Transverse colon (tissue), 4 donors: ENCODE measurements at regions of chr12 and their contacts with region 1.

Region 1: GRCh38 chr12:64696080-64696741 is 63.0 kb downstream of the GNS start:
- DNase-seq: no peak
- H3K4me3 ChIP-seq: no peak overlapping the region
- H3K27ac ChIP-seq: peak overlapping the region; percentile 21 to 51 (median 34)
- H3K4me1 ChIP-seq: peaks cover 0 to 55% (median 12%) of the 10 kb centered on the region in 4 donors
- H3K27me3 ChIP-seq: no peaks in the 10 kb centered on the region
- CTCF ChIP-seq: peak in 4 of 5 experiments; percentile 23 to 39 (median 30)
- EP300 ChIP-seq: no peak
- POLR2A ChIP-seq: no peak

Region 2: GRCh38 chr12:64440100-64440499 is 256.1 kb before region 1 on chr12:
- in situ Hi-C with region 1: loop called in 1 of 4 experiments (anchors 25 kb)
- intact Hi-C with region 1: loop called (anchors 5 kb)
- DNase-seq: no peak
- H3K4me3 ChIP-seq: no peak overlapping the region
- H3K27ac ChIP-seq: no peak overlapping the region
- H3K4me1 ChIP-seq: no peaks in the 10 kb centered on the region
- H3K27me3 ChIP-seq: no peaks in the 10 kb centered on the region
- CTCF ChIP-seq: no peak
- EP300 ChIP-seq: no peak
- POLR2A ChIP-seq: no peak

Region 3: DNA sequence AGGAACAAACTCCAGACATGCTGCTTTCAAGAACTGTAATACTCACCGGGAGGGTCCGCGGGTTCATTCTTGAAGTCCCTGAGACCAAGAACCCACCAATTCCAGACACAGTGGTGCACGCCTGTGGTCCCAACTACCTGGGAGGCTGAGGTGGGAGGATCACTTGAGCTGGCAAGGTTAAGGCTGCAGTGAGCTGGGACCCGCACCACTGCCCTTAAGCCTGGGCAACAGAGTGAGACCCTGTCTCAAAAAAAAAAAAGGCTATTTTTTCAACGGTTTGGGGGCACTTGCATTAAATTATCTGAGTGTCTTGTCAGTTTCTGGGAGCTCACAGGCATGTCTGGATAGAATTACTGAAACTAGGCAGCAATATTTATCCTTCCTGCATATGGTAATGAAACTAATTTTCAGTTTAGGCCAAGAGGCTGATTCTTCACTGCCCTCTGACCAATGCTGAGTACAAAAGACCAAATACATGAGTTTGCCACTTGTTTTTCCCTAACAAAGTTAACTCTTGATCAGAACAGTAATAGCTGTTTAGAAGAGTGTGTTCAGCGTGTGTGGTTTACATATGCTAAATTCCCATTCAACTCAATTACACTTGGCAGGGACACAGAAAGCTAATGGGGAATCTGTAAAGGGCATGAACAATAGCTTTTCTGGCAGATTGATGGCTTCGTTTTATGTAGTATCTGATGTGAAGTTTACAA is 151.7 kb before region 1 on chr12:
- in situ Hi-C with region 1: loop called in 2 of 4 experiments (anchors 5 kb)
- intact Hi-C with region 1: no loop called
- DNase-seq: no peak
- H3K4me3 ChIP-seq: no peak overlapping the region
- H3K27ac ChIP-seq: no peak overlapping the region
- H3K4me1 ChIP-seq: no peaks in the 10 kb centered on the region
- H3K27me3 ChIP-seq: no peaks in the 10 kb centered on the region
- CTCF ChIP-seq: no peak
- EP300 ChIP-seq: no peak
- POLR2A ChIP-seq: no peak

Region 4: GRCh38 chr12:64551698-64552097 is 144.5 kb before region 1 on chr12:
- in situ Hi-C with region 1: loop called (anchors 5 to 10 kb)
- intact Hi-C with region 1: loop called (anchors 5 kb)
- DNase-seq: no peak
- H3K4me3 ChIP-seq: no peak overlapping the region
- H3K27ac ChIP-seq: no peak overlapping the region
- H3K4me1 ChIP-seq: peaks cover 0 to 6% (median 0%) of the 10 kb centered on the region in 4 donors
- H3K27me3 ChIP-seq: no peaks in the 10 kb centered on the region
- CTCF ChIP-seq: no peak
- EP300 ChIP-seq: no peak
- POLR2A ChIP-seq: no peak

Region 5: GRCh38 chr12:64610149-64610678 is 86.0 kb before region 1 on chr12 and contains the start of gene RASSF3:
- in situ Hi-C with region 1: loop called in 1 of 4 experiments (anchors 10 kb)
- intact Hi-C with region 1: loop called (anchors 5 kb)
- DNase-seq: peak; percentile 85
- H3K4me3 ChIP-seq: peak within 1 kb of the TSS; percentile 82 to 95 (median 86)
- H3K27ac ChIP-seq: peak within 1 kb of the TSS; percentile 91 to 97 (median 96)
- H3K4me1 ChIP-seq: peaks cover 5 to 38% (median 14%) of the 10 kb centered on the region in 4 donors
- H3K27me3 ChIP-seq: no peaks in the 10 kb centered on the region
- CTCF ChIP-seq: no peak
- EP300 ChIP-seq: no peak
- POLR2A ChIP-seq: peak; percentile 59
- total RNA-seq, gene RASSF3: 41.6 to 83.2 (median 62.5) TPM

Region 6: DNA sequence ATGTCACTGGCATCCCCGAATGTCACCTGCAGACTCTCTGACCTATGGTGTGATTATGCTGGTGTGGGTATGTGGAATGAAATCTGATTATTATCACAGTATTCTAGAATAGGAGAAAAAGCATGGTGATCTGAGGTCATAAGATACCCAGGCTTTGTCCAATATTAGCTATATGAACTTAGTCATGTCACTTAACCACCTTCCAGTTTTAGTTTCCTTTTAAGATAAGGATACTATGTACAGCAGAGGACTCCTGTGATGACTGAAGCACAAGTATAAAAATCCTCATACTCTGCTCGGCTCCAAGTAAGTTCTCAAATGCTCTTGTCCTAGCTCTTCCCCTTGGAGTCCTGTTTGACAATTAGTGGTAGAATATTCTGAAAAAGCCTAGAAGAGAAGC is 60.2 kb after region 1 on chr12:
- in situ Hi-C with region 1: no loop called
- intact Hi-C with region 1: no loop called
- DNase-seq: no peak
- H3K4me3 ChIP-seq: no peak overlapping the region
- H3K27ac ChIP-seq: no peak overlapping the region
- H3K4me1 ChIP-seq: peaks cover 5 to 32% (median 8%) of the 10 kb centered on the region in 4 donors
- H3K27me3 ChIP-seq: no peaks in the 10 kb centered on the region
- CTCF ChIP-seq: no peak
- EP300 ChIP-seq: no peak
- POLR2A ChIP-seq: no peak

Region 7: GRCh38 chr12:64801381-64801780 is 105.2 kb after region 1 on chr12:
- in situ Hi-C with region 1: no loop called
- intact Hi-C with region 1: no loop called
- DNase-seq: no peak
- H3K4me3 ChIP-seq: no peak overlapping the region
- H3K27ac ChIP-seq: no peak overlapping the region
- H3K4me1 ChIP-seq: peaks cover 0 to 7% (median 0%) of the 10 kb centered on the region in 4 donors
- H3K27me3 ChIP-seq: no peaks in the 10 kb centered on the region
- CTCF ChIP-seq: no peak
- EP300 ChIP-seq: no peak
- POLR2A ChIP-seq: no peak

Region 8: GRCh38 chr12:64890873-64891468 is 194.8 kb after region 1 on chr12:
- in situ Hi-C with region 1: no loop called
- intact Hi-C with region 1: no loop called
- DNase-seq: no peak
- H3K4me3 ChIP-seq: no peak overlapping the region
- H3K27ac ChIP-seq: no peak overlapping the region
- H3K4me1 ChIP-seq: no peaks in the 10 kb centered on the region
- H3K27me3 ChIP-seq: no peaks in the 10 kb centered on the region
- CTCF ChIP-seq: peak; percentile 70 to 89 (median 81)
- EP300 ChIP-seq: no peak
- POLR2A ChIP-seq: no peak